Naive thymus-derived CD8-positive, alpha-beta T cell (primary cell): ENCODE measurements at regions of chr10 and their contacts with region 1.

Region 1: DNA sequence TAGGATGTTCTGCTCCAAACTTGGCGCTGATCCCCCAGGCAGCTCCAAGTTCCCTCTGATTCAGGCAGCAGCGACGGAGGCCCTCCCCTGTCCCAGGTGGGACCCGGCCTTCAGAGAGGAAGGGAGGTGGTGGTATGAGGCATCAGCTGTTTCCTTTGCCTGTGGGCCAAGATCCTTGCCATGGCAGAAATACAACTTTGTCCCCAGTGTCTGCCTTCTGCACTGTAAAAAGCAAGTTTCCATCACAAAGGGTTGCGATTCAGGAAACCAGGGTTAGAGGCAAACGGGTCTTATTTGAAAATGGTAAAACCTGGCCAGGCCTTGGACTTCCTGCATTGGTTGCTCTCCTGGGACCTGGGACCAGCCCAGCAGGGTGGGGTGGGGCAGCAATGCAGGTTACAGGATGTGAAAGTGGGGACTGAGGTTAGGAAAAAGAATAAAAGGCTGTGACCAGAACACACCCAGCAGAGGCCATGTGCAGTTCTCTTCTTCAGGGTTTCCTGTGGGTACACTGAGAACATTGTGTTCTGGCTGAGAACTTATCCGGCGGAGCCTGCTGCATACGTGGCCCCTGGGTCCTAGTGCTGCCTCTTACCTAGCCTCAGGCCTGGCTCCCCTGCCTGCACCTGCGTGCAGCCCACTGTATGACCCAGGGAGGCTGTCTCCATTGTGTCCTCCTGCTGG is 25.1 kb upstream of the DDIT4 start:
- DNase-seq: peak; percentile 46 to 92 (median 81)
- ATAC-seq: peak; percentile 82 to 86
- H3K4me3 Mint-ChIP-seq: peak overlapping the region; percentile 70 to 91 (median 86)
- H3K27ac Mint-ChIP-seq: peak overlapping the region; percentile 93 to 99 (median 98)
- H3K4me1 Mint-ChIP-seq: peaks cover 49 to 95% (median 90%) of the 10 kb centered on the region in 4 donors
- H3K27me3 Mint-ChIP-seq: no peaks in the 10 kb centered on the region

Region 2: GRCh38 chr10:72223743-72224101 is 24.9 kb before region 1 on chr10:
- POLR2A ChIA-PET with region 1: interaction called, 11 read pairs
- DNase-seq: no peak
- ATAC-seq: no peak
- H3K4me3 Mint-ChIP-seq: peak overlapping the region in 8 of 10 donors; percentile 24 to 69 (median 55)
- H3K27ac Mint-ChIP-seq: peak overlapping the region; percentile 48 to 91 (median 81)
- H3K4me1 Mint-ChIP-seq: peaks cover 20 to 66% (median 60%) of the 10 kb centered on the region in 4 donors
- H3K27me3 Mint-ChIP-seq: no peaks in the 10 kb centered on the region

Region 3: DNA sequence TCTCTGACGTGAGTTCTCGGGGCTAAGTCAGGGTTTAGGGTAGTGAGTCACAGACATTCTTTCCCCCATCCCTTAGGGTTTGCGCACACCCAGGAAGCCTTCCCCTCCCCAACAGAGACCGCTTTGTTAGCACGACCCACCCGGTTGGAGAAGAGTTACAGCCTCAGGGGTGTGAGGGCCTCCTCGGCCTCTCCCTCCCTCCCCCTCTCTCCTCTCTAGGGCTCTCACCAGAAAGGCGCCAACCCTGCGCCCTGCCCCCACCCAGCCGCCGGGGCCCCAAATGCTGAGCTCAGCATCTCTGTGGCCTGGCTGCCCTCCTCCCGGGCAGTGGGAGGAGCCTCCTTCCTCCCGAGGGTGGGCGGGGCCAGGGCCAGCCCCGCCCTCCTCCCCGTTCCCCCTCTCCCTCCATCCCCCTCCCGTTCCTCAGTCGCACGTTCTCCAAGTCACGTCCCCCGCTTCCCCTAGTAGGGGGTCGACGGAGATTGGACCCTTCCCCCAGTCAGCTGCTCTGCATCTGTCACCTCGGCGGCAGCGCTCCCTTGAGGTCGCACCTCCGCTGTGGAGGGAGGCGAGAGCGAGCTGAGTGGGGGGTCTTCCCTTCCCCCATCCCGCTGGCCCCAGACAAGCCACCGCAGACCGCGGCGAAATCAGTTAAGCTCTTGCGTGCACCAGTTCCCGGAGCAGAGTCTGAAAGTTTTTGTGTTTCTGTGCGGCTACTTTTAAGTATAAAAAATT is 12.1 kb after region 1 on chr10:
- POLR2A ChIA-PET with region 1: interaction called, 26 read pairs
- DNase-seq: peak; percentile 62 to 86 (median 72)
- ATAC-seq: peak; percentile 72 to 75
- H3K4me3 Mint-ChIP-seq: peak overlapping the region; percentile 82 to 94 (median 89)
- H3K27ac Mint-ChIP-seq: peak overlapping the region; percentile 87 to 99 (median 94)
- H3K4me1 Mint-ChIP-seq: peaks cover 37 to 76% (median 75%) of the 10 kb centered on the region in 4 donors
- H3K27me3 Mint-ChIP-seq: no peaks in the 10 kb centered on the region

Region 4: DNA sequence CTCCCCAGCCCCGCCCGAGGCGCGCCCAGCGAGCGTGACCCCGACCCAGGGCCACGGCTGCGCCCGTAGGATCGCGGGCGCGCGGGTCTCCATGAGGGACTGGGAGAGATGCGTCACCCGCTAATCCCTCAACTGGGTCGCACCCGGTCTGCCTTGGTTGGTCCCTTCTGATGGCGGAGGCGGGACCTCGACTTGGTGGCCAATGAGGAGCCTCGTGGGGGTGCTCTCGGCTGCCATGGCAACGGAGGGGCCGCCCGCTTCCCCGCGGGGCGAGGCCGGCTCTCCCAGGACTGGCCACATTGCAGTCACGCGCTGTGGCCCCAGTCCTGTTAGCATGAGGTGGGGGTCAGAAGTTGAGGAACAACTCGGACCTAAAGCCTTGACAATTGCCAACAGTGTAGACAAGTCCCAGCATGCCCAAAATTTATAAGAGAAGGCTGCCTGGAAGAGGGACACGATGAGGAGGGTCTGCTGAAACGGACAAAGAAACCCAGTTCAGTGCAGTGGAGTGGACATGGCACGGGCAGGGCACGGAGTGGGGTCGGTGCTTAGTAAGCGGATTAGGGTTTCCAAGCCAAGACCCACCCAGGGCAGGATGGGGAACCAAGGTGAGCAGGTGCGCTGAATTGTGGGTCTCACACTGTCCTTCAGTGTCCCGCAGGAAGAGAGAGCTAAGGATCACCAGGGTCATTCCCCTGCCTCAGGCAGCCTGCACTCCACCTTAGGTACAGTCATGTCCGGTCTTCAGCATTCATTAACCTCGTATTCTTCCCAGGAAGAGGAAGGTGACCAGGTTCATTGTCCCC is 49.6 kb after region 1 on chr10:
- POLR2A ChIA-PET with region 1: interaction called, 23 read pairs
- DNase-seq: peak; percentile 51 to 90 (median 78)
- ATAC-seq: peak; percentile 51
- H3K4me3 Mint-ChIP-seq: peak overlapping the region; percentile 39 to 89 (median 82)
- H3K27ac Mint-ChIP-seq: peak overlapping the region; percentile 43 to 100 (median 97)
- H3K4me1 Mint-ChIP-seq: peaks cover 25 to 63% (median 58%) of the 10 kb centered on the region in 4 donors
- H3K27me3 Mint-ChIP-seq: peaks cover 0 to 2% (median 0%) of the 10 kb centered on the region in 5 donors

Region 5: DNA sequence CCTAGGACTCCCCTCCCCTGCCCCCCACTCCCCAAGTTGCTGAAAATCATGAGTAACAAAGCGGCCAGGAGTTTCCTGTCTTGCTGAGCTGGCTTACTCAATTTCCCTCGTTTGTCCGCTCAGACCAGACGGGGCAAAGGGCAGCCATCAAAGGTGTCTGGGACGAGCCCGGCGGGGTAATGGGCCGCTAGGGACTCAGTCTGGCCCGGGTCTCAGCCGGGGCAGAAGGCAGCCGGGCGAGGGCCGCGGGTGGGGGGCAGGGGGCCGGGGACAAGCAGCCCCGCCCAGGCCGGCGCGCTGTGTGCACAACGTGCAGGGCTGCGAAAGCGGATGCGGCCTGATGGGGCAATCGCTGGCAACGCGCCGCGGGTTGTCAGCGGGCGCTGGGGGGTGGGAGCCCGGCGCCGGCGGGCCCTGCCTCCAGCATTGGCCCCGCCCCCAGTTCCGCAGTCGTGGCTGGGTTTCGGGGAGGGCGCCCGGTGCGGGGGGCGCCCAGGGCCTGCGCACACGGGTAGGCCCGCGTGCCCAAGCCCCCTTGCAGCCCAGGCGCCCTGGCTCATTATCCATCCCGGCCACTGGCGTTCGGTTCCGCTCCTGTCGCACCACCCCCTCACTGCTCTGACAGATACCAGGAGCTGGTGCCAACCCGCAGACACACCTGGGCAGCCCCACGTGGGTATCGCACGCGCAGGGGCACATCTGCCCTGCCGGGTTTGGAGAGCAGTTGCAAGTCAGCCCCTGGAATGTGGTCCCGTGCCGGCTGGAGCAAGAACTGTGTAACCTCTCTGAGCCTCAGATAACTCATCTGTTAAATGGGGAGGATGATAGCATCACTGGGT is 71.0 kb after region 1 on chr10:
- POLR2A ChIA-PET with region 1: interaction called, 16 read pairs
- DNase-seq: peak; percentile 78 to 93 (median 88)
- ATAC-seq: peak; percentile 71 to 82
- H3K4me3 Mint-ChIP-seq: peak overlapping the region; percentile 67 to 85 (median 82)
- H3K27ac Mint-ChIP-seq: peak overlapping the region; percentile 90 to 99 (median 98)
- H3K4me1 Mint-ChIP-seq: peaks cover 46 to 90% (median 88%) of the 10 kb centered on the region in 4 donors
- H3K27me3 Mint-ChIP-seq: no peaks in the 10 kb centered on the region

Region 6: DNA sequence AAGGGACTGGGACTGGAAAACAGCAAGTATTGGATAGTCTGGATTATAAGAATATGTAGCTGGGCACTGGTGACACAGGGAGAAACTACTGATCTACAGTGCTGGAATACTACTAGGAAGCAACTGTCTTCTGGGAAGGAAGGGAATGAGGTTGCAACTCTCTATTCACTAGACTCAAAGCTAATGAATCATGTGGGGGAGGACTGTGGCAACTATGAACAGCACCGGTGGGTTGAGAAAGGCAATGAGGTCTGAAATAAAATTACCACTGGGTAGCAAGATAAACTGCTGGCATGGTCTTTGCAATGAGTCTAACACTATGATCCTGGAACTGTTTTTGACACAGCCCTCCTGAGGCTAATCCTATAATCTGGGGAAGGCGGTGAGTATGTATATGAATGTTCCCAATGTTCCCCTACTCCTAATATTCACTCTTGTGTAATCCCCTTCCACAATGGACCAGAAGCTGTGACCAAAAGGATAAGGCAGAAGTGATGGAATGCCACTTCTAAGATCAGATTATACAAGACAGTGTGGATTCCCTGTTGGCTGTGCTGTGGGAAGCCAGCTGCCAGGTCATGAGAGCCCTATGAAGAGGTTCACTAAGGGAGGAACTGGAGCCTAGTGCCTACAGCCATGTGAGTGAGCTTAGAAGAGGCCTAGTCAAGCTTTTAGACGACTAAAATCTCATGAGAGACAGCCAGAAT is 207.4 kb after region 1 on chr10:
- POLR2A ChIA-PET with region 1: no interaction called
- DNase-seq: no peak
- ATAC-seq: no peak
- H3K4me3 Mint-ChIP-seq: no peak overlapping the region
- H3K27ac Mint-ChIP-seq: no peak overlapping the region
- H3K4me1 Mint-ChIP-seq: peaks cover 0 to 2% (median 0%) of the 10 kb centered on the region in 4 donors
- H3K27me3 Mint-ChIP-seq: no peaks in the 10 kb centered on the region